GM18951 (cell line): ENCODE measurements at regions of chr21 and their contacts with region 1.

Region 1: DNA sequence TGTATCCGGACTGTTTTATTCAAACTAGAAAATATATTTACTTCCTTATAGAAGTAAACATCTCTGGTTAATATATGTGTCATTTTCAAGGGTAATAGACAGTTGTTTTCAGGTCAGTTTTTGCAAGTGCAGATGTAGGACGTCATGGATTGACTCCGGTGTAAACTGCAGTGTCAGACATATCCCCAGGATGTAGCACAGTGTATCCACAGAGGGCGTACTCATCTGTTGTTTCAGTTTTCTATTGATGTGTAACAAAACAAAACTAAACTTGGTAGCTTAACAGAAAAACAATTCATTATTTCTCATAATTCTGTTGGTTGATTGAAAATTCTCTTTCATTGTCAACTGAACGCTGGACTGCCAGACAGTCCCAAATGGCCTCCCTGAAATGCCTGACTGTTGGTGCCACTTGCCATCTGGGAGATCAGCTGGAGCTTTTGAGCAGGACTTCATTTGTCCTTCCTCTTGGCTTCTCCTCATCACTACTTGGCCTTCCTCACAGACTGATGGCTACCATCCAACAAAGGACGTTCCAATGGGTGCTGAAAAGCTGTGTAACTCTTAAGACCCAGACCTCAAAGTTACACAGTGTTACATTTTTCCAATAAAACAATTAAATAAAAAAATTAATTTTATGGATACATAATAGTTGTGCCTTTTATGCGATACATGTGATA is 181.6 kb downstream of the NCAM2 start:
- POLR2A ChIP-seq: no peak

Region 2: DNA sequence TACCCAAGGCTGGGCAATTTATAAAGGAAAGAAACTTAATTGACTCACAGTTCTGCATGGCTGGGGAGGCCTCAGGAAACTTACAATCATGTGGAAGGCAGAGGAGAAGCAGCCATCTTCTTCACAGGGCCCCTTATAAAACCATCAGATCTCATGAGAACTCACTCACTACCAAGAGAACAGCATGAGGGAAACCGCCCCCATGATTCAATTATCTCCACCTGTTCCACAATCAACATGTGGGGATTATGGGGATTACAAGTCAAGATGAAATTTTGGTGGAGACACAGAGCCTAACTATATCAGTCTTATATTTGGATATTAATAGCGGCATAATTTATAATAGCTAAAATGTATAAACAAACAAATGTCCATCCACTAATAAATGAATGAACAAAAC is 1305.2 kb before region 1 on chr21:
- in situ Hi-C with region 1: loop called (anchors 10 kb)
- POLR2A ChIP-seq: no peak

Region 3: DNA sequence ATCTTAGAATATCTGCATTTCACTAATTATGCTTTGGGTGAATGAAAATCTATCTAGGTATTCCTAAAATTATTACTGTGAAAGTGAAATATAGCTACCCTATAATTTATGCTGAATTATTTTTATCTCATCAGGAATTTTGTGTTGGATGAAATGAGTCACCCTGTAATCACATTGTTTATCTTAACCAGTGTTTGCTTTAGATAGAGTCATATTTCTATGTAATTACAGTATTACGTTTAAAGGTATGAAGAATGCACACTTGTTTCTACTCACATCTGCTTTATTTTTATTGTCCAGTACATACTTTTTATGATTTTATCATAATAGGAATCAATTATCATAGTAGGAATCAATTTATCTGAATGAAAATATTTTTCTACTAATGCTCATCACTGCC is 67.7 kb after region 1 on chr21:
- in situ Hi-C with region 1: no loop called
- POLR2A ChIP-seq: no peak

Region 4: DNA sequence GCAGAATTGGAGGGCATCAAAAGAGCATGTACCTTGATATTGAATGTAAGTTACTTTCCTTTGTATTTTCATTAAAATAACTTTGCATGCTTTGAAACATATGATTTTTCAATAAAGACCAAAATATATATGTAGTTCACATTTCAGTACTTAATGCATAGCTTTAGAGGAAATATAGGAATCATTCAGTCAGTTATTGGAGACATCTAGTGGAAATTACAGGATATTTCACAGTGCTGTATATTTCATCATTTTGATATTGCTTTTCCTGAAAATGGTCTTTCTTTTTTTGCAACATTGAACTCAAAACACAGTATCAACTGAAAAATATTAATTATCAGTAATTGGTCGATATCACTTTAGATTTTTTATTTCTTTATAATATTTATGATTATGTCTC is 194.2 kb after region 1 on chr21:
- in situ Hi-C with region 1: no loop called
- POLR2A ChIP-seq: no peak